ENCODE measurements at regions of chr17 and their contacts with region 1.

Region 1: DNA sequence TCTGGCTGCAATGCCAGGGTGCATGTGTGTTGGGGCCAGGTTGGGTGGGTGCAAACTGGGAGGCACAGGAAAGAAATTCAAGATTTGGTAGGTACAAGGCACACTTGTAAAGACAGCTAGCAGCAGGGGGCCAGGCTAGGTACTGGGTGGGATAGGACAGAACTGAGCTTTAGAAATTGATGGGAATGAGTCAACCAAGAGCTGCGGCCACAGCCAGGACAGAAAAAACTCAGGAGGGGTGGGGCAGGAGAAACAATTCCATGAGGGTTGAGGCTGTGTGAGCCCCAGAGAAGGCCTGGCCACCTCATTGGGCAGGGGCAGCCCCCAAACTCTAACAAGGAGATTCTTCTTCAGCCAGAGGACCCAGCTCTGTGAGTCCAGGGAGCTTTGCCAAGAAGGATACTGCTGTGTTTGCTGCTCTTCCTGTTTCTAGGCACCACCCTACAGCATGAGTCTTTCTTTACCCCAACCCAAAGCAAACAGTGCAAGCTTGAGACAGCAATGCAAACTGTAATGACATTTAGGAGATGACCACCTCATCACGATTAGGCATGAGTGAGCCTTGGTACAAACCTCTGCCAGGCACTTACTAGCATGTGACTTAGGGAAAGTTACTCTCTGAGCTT is 21.3 kb upstream of the CCDC182 start:
- DNase-seq: no peak
- H3K4me3 ChIP-seq: no peak overlapping the region
- H3K27ac ChIP-seq: no peak overlapping the region
- H3K4me1 ChIP-seq: no peaks in the 10 kb centered on the region
- H3K27me3 ChIP-seq: no peaks in the 10 kb centered on the region
- CTCF ChIP-seq: no peak

Region 2: GRCh38 chr17:57755480-57756070 is 10.9 kb before region 1 on chr17:
- CTCF ChIA-PET with region 1: no interaction called
- dilution Hi-C with region 1: no loop called
- in situ Hi-C with region 1: no loop called
- intact Hi-C with region 1: no loop called
- DNase-seq: no peak
- H3K4me3 ChIP-seq: no peak overlapping the region
- H3K27ac ChIP-seq: no peak overlapping the region
- H3K4me1 ChIP-seq: no peaks in the 10 kb centered on the region
- H3K27me3 ChIP-seq: no peaks in the 10 kb centered on the region
- CTCF ChIP-seq: no peak

Region 3: GRCh38 chr17:57819285-57819684 is 52.9 kb after region 1 on chr17:
- CTCF ChIA-PET with region 1: no interaction called
- dilution Hi-C with region 1: loop called (anchors 5 kb)
- in situ Hi-C with region 1: no loop called
- intact Hi-C with region 1: no loop called
- DNase-seq: peak; percentile 83
- H3K4me3 ChIP-seq: no peak overlapping the region
- H3K27ac ChIP-seq: no peak overlapping the region
- H3K4me1 ChIP-seq: peaks cover 14% of the 10 kb centered on the region
- H3K27me3 ChIP-seq: no peaks in the 10 kb centered on the region
- CTCF ChIP-seq: no peak